HepG2 (cell line): ENCODE measurements at regions of chr12 and their contacts with region 1.

Region 1: DNA sequence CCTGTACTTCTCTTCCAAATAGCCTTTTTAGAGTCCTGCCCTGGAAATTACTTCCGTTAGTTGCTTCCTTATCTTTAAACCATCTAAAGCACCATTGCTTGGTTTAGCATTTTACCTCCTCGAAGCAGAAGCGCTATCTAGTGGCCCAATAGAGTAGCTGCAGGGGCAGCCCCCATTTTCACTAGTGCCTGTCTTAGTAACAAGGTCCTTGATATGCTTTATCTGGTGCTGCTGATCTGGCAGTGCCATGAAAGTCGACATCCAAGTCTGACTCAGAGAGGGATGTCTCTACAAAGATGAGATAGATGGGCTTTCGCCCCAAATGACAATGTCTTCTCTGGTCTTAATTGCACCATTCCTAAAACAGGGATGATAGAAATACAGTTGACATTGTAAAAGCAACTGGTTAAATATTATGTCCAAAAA is 25.0 kb upstream of the CIT start:
- DNase-seq: peak; percentile 57
- ATAC-seq: peak; percentile 87
- H3K4me3 ChIP-seq: no peak overlapping the region
- H3K27ac ChIP-seq: no peak overlapping the region
- H3K4me1 ChIP-seq: peaks cover 16% of the 10 kb centered on the region; the same call in 1 of the 2 replicates
- H3K27me3 ChIP-seq: no peaks in the 10 kb centered on the region; a peak in 1 of 5 replicates
- CTCF ChIP-seq: peak; percentile 80
- EP300 ChIP-seq: no peak
- POLR2A ChIP-seq: no peak
- RAD21 ChIP-seq: no peak

Region 2: GRCh38 chr12:119667577-119668323 is 234.3 kb before region 1 on chr12 and contains the start of gene PRKAB1:
- CTCF ChIA-PET with region 1: no interaction called
- POLR2A ChIA-PET with region 1: no interaction called
- in situ Hi-C with region 1: no loop called
- intact Hi-C with region 1: no loop called
- DNase-seq: peak; percentile 96
- ATAC-seq: peak; percentile 94
- H3K4me3 ChIP-seq: peak within 1 kb of the TSS; percentile 88 to 91 (median 89)
- H3K27ac ChIP-seq: peak within 1 kb of the TSS; percentile 90
- H3K4me1 ChIP-seq: peaks cover 43% of the 10 kb centered on the region
- H3K27me3 ChIP-seq: no peaks in the 10 kb centered on the region; a peak in 1 of 5 replicates
- CTCF ChIP-seq: peak; percentile 89
- EP300 ChIP-seq: no peak
- POLR2A ChIP-seq: peak; percentile 77 to 80
- RAD21 ChIP-seq: peak; percentile 62; the same call in 1 of the 2 replicates
- total RNA-seq, gene PRKAB1: 25.4 and 28.4 TPM in 2 replicates

Region 3: GRCh38 chr12:119742700-119743099 is 159.4 kb before region 1 on chr12:
- CTCF ChIA-PET with region 1: no interaction called
- POLR2A ChIA-PET with region 1: no interaction called
- in situ Hi-C with region 1: no loop called
- intact Hi-C with region 1: no loop called
- DNase-seq: no peak
- ATAC-seq: no peak
- H3K4me3 ChIP-seq: no peak overlapping the region
- H3K27ac ChIP-seq: no peak overlapping the region
- H3K4me1 ChIP-seq: no peaks in the 10 kb centered on the region
- H3K27me3 ChIP-seq: no peaks in the 10 kb centered on the region
- CTCF ChIP-seq: no peak
- EP300 ChIP-seq: no peak
- POLR2A ChIP-seq: no peak
- RAD21 ChIP-seq: no peak

Region 4: GRCh38 chr12:119804011-119804641 is 98.0 kb before region 1 on chr12:
- CTCF ChIA-PET with region 1: no interaction called
- POLR2A ChIA-PET with region 1: no interaction called
- in situ Hi-C with region 1: no loop called
- intact Hi-C with region 1: loop called (anchors 2 kb)
- DNase-seq: peak; percentile 54
- ATAC-seq: peak; percentile 100
- H3K4me3 ChIP-seq: no peak overlapping the region
- H3K27ac ChIP-seq: no peak overlapping the region
- H3K4me1 ChIP-seq: peaks cover 8% of the 10 kb centered on the region; the same call in 1 of the 2 replicates
- H3K27me3 ChIP-seq: no peaks in the 10 kb centered on the region
- CTCF ChIP-seq: peak; percentile 76
- EP300 ChIP-seq: no peak
- POLR2A ChIP-seq: no peak
- RAD21 ChIP-seq: peak; percentile 56

Region 5: DNA sequence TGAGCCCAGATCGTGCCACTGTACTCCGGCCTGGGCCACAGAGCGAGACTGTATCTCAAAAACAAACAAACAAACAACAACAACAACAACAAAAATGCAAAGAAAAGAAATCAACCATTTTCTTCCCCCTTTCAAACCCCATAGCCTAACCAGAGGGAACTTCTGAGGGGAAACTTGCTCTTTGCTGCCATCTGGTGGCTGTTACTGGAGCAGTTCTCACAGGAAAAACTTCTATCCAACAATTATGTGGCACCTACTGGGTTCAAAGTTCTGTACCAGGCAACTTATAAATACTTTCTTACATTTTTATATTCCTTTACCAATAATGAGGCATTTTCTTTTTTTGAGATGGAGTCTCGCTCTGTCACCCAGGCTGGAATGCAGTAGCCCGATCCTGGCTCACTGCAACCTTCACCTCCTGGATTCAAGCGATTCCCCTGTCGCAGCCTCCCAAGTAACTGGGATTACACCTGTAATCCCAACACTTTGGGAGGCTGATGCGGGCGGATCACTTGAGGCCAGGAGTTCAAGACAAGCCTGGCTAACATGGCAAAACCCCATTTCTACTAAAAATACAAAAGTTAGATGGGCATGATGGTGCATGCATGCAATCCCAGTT is 36.1 kb after region 1 on chr12:
- CTCF ChIA-PET with region 1: no interaction called
- POLR2A ChIA-PET with region 1: no interaction called
- in situ Hi-C with region 1: no loop called
- intact Hi-C with region 1: loop called (anchors 5 kb)
- DNase-seq: peak; percentile 39
- ATAC-seq: peak; percentile 67
- H3K4me3 ChIP-seq: no peak overlapping the region
- H3K27ac ChIP-seq: no peak overlapping the region
- H3K4me1 ChIP-seq: peaks cover 23% of the 10 kb centered on the region
- H3K27me3 ChIP-seq: peaks cover 0 to 3% of the 10 kb centered on the region in 2 experiments; a peak in 1 of 5 replicates
- CTCF ChIP-seq: peak; percentile 76
- EP300 ChIP-seq: no peak
- POLR2A ChIP-seq: no peak
- RAD21 ChIP-seq: peak; percentile 39; the same call in 1 of the 2 replicates